AG04450 (cell line): ENCODE measurements at regions of chr3 and their contacts with region 1.

Region 1: DNA sequence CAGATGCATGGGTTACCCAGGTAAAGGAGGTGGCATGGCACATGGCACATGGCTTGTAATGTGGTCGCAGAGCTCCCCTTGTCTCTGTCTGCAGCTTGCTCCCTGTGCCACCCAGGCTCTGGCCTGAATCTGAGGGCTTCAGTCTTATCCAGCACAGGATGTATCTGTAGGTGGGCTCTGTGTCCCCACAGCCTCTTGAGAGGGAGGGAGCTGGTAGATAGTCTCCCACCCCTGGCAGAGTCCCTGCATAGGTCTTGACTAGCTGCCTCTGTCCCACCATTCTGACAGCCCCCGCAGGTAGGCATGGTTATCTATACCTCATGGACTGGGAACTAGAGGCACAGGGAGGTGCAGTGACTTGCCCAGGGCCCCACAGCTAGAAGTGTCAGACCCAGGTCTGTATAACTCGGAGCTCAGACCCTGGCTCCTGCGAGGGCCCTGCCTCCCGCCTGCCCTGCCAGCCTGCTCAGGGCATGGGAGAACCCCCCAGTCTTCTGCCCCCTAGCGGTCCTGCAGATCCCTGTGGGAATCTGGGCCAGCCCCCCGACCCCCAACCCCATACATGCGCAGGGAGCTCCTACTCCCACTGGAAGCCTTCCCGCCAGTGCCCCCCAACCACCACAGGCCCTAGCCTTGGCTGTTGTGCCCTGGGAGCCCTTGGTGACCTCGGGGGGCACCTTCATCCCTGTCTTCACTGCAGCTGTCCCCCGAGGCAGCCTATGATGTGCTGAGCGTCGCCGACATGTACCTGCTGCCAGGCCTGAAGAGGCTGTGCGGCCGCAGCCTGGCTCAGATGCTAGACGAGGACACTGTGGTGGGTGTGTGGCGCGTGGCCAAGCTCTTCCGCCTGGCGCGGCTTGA is 6.8 kb downstream of the ABTB1 start:
- DNase-seq: no peak
- H3K4me3 ChIP-seq: no peak overlapping the region
- H3K27ac ChIP-seq: no peak overlapping the region
- H3K27me3 ChIP-seq: no peaks in the 10 kb centered on the region
- CTCF ChIP-seq: peak; percentile 11; the same call in 1 of the 2 replicates

Region 2: DNA sequence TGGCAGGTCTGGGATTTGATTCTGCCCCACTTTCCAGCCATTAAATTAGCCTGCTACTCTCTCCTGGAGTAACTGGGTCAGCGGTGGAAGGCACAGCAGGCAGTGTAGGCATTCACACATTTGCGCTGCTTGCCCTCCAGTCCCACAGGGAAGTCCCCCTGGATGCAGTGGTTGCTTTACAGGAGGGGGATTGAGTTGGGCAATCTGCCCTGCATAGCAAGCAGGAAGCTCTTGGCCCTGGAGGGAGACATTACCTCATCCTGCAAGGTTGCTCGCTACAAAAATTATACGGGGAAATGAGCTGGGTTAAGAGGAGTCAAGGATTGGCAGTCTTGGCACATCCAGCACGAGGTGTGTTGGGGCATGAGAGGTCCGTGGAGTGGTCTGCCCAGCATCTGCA is 66.5 kb before region 1 on chr3:
- CTCF ChIA-PET with region 1: no interaction called
- POLR2A ChIA-PET with region 1: interaction called, 14 read pairs
- DNase-seq: no peak
- H3K4me3 ChIP-seq: no peak overlapping the region
- H3K27ac ChIP-seq: no peak overlapping the region
- H3K27me3 ChIP-seq: no peaks in the 10 kb centered on the region
- CTCF ChIP-seq: no peak

Region 3: DNA sequence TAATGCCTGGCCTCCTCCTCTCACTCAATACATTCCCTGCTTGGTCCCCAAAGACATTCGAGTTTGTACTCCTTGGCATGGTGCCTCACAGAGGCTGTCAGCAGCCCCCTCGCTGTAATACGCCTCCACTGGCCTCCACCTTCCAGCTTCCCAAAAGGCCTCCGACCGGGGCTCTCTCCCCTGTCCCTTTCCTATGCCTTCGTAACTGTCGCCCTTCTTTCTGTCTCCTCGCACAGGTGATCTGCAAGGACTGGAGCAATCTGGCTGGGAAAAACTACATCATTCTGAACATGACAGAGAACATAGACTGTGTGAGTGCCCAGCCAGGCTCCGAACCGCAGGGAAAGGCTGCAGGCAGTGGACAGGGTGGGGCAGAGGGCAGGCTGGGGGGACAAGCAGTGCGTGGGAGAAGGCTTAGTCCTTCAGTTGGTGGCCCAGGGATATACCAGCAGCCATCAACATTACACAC is 17.5 kb before region 1 on chr3:
- CTCF ChIA-PET with region 1: no interaction called
- POLR2A ChIA-PET with region 1: no interaction called
- DNase-seq: no peak
- H3K4me3 ChIP-seq: no peak overlapping the region
- H3K27ac ChIP-seq: no peak overlapping the region
- H3K27me3 ChIP-seq: peaks cover 2% of the 10 kb centered on the region
- CTCF ChIP-seq: no peak